Endothelial cell of umbilical vein (primary cell): ENCODE measurements at regions of chr19 and their contacts with region 1.

Region 1: DNA sequence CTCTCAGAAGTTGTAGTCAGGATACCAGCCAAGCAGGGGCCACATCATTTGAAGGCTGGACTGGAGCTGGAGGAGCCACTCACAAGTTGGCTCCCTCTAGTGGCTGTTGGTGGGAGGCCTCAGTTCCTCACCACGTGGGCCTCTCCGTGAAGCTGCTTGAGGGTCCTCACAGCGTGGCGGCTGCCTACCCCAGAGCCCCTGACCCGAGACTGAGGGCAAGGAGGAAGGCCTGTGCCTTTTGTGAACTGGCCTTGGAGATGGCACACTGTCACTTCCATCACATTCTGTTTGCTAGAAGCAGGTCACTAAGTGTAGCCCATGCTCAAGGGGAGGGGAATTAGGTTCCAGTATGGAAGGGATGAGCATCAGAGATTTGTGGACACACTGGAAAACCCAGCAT is 14.6 kb downstream of the GNA11 start:
- DNase-seq: peak; percentile 62
- H3K4me3 ChIP-seq: no peak overlapping the region
- H3K27ac ChIP-seq: no peak overlapping the region
- H3K4me1 ChIP-seq: no peaks in the 10 kb centered on the region
- H3K27me3 ChIP-seq: no peaks in the 10 kb centered on the region
- CTCF ChIP-seq: peak; percentile 85 to 93
- POLR2A ChIP-seq: no peak

Region 2: DNA sequence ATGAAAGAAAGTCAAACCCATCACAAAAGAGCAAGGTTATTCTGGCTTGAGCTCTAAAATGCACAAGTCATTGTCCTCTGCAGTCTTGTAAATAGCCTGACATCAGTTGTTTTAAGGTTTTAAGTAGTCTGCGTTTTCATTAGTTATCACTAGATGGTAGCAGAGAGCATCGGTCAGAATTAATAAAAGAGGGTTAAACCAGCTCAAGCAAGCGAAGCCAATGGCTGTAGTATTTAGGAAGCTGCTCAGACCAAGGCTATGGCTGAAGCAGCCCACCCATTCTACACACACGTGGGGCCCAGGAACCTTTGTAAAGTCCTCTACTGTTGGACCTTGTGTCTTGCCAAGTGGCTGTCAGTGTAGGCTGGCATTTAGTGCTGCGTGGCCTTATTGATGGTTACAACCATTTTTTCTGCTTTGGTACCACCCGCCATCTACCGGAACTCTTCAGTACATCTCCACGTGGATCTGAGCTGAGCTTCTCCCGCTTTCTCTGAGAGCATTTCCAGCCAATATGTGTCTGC is 221.3 kb before region 1 on chr19:
- CTCF ChIA-PET with region 1: interaction called, 14 read pairs
- POLR2A ChIA-PET with region 1: no interaction called
- dilution Hi-C with region 1: no loop called
- intact Hi-C with region 1: no loop called
- DNase-seq: peak; percentile 85
- H3K4me3 ChIP-seq: no peak overlapping the region
- H3K27ac ChIP-seq: no peak overlapping the region
- H3K4me1 ChIP-seq: peaks cover 3% of the 10 kb centered on the region
- H3K27me3 ChIP-seq: no peaks in the 10 kb centered on the region
- CTCF ChIP-seq: peak; percentile 58 to 60
- POLR2A ChIP-seq: no peak

Region 3: GRCh38 chr19:2969104-2969504 is 139.7 kb before region 1 on chr19:
- CTCF ChIA-PET with region 1: interaction called, 200 read pairs
- POLR2A ChIA-PET with region 1: no interaction called
- dilution Hi-C with region 1: no loop called
- intact Hi-C with region 1: no loop called
- DNase-seq: peak; percentile 78
- H3K4me3 ChIP-seq: no peak overlapping the region
- H3K27ac ChIP-seq: peak overlapping the region; percentile 65
- H3K4me1 ChIP-seq: peaks cover 23% of the 10 kb centered on the region
- H3K27me3 ChIP-seq: no peaks in the 10 kb centered on the region
- CTCF ChIP-seq: no peak
- POLR2A ChIP-seq: no peak

Region 4: GRCh38 chr19:3084943-3085342 is 23.8 kb before region 1 on chr19:
- CTCF ChIA-PET with region 1: interaction called, 40 read pairs
- POLR2A ChIA-PET with region 1: interaction called, 3 read pairs
- dilution Hi-C with region 1: no loop called
- intact Hi-C with region 1: no loop called
- DNase-seq: no peak
- H3K4me3 ChIP-seq: no peak overlapping the region
- H3K27ac ChIP-seq: no peak overlapping the region
- H3K4me1 ChIP-seq: no peaks in the 10 kb centered on the region
- H3K27me3 ChIP-seq: no peaks in the 10 kb centered on the region
- CTCF ChIP-seq: no peak
- POLR2A ChIP-seq: no peak